ENCODE measurements at regions of chr18 and their contacts with region 1.

Region 1: DNA sequence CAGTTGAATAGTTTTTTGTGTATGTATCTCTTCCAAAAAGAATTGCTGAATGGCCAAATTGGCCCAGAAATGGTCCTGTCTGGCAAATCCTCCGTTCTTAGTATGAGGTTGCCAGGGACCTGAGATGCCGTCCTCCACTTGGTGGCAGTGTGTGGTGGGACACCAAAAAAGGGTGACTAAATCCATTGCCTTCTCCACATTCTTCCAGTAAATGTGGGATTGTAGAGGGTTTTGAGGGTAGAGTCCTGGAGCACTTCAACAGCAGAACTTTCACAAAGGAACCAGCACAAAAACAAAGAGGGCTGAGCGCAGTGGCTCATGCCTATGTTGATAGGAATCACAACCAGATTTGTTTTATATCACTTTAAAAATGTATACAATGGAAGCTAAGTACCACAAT is 199.9 kb downstream of the BCL2 start:
- DNase-seq: peak in 1 of 2 donors; percentile 52
- ATAC-seq: peak; percentile 75

Region 2: DNA sequence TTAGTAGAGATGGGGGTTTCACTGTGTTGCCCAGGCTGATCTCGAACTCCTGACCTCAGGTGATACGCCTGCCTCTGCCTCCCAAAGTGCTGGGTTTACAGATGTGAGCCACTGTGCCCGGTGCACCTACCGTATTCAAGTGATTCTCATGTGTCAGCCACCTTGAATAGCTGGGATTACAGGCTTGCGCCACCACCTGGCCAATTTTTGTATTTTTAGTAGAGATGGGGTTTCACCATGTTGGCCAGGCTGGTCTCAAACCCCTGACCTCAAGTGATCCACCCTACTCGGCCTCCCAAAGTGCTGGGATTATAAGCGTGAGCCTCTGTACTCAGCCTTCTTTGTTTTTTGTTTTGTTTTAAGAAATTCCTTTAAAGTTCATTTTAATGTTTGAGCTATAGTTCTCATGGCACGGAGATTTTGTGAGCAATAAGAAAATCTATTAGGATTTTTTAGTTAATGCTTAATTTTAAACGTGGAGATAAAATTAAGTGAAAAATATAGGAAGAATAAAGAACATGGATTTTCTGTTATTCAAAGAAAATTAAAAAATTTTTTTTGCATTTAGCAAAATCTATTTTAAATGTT is 161.7 kb before region 1 on chr18:
- intact Hi-C with region 1: no loop called
- DNase-seq: peak in 1 of 2 donors; percentile 49
- ATAC-seq: peak; percentile 75

Region 3: DNA sequence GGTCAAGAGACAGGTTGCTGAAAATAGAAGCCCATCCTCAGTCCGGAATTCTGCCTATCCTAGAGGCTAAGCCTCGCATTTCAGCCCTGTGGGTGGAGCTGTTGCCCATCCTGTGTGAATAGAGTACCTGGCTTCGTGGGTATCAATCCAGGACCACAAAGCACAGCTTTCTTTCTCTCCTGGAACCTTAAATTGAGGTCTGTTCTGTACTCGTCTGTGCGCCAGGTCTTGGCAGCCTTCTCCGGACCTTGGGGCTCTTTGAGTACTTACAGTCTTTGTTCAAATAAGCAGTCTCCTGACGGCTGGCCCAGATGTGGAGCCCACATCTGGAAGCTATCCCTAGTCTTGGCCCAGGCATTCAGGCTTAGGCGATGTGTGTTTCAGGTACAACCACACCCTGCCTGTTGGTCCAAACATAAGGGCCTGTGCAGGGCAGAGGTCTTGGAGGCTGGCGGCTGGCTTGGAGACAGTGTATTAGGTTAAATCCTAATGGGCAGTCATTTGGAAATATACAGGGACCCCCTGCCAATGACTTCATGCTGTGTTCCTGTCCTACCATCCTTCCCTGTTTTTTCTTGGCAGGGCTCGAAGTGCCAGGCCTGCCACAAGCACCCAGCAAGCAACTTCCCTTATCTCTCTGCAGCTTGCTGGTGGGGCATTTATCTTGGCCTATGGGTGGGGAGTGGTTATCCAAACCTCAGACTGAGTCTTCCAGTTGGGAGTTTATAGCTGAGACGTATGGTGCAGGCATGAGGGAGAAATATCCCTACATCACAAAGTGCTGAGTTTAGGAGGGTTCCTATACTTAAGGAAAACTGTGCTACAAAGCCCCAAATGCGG is 94.2 kb before region 1 on chr18:
- intact Hi-C with region 1: loop called in 1 of 2 experiments (anchors 10 kb)
- DNase-seq: peak in 1 of 2 donors; percentile 31
- ATAC-seq: peak; percentile 67

Region 4: DNA sequence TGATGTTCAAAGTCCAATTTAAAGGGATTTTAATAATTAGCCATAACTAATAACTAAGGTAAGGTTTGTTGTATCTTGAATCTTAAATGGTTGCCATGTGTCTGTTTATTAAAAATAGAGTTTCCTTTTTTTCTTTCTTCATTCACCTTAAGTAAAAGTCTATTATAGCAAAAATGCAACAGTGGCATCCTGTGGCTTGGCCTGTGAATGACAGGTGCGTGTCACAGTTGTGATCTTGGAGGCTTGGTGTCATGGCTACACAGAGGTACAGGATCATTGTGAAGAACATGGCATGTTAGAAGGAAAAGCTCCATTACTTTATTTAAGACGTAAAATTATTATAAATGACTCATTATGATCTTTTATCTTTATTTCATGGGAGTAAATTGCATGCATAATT is 46.2 kb before region 1 on chr18:
- intact Hi-C with region 1: no loop called
- DNase-seq: no peak
- ATAC-seq: peak; percentile 50

Region 5: GRCh38 chr18:63439334-63439733 is 319.7 kb after region 1 on chr18:
- intact Hi-C with region 1: loop called in 1 of 2 experiments (anchors 10 kb)
- DNase-seq: peak in 1 of 2 donors; percentile 31
- ATAC-seq: peak; percentile 65

Region 6: DNA sequence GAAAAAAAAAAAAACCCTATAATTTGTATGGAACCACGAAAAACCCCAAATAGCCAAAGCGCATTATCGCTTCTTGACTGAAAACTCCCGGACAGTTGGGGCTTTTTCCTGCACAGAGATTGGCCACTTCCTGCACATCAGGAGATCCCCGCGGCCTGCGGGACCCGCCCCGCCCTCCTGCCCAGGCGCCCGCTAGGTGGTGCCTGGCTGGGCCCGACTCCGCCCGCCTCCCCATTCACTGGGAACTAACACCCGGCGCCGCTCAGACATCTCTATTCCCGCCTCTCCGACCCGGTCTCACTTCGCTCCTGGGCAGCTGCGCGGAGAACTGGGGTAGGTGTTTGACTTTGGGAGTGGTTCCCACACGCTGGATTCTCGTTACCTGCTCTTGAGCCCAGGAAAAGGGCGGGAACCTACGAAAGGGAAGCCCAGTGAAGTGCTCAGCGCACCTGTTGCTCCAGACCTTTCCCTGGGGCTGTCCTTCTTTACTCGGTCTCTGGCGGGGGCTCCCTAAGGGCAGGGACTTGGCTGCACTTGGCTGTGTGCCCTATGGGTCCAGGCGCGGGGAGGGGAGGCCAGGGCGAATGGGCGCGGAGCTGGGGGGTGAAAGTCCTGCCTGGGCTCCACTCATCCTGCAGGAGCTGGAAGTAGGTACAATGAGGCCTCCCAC is 829.6 kb after region 1 on chr18 and contains the start of gene HMSD:
- intact Hi-C with region 1: no loop called
- DNase-seq: peak; percentile 66 to 73
- ATAC-seq: peak; percentile 100
- total RNA-seq, gene HMSD: 0.55 TPM in 1 of 2 donors, not detected in the other

Measured in left colon (tissue), 2 donors.